PC-9 (cell line): ENCODE measurements at regions of chr1 and their contacts with region 1.

Region 1: DNA sequence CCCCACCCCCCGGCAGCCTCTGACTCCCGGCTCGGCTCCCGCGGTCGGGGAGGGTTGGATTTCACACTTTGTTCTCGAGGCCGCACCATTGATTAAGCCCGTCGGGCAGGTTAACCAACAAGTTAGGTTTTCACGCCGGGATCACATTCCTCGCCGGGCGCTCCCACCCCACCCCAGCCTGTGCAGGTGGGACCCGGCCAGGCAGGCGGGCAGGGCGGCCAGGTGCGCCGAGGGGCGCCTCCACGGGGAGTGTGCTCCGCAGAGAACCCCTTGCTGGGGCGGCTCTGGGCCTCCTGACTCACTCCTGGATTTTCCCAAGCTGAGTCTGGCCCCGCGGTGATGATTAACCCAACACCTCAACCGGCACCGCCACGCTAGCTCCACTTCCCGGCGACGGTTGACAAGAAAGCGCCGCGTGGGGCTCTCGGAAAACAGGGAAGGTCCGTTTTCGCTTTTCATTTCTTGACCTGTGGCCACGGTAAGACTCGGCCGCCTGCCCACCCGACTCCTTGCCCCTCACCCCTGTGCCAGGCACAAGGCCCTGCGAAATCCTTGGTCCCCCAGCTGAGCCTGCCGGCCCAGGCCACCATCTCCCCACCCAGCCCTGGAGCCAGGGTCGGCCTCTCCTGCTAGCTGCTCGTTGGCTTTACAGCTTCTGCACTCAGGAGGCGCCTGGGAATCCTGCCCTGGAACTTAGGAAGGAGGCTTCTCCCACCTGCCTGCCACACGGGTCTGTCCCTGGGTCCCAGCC is 8.8 kb upstream of the TTLL10 start:
- DNase-seq: peak; percentile 76 to 78
- H3K4me3 ChIP-seq: peak overlapping the region; percentile 99
- H3K27ac ChIP-seq: peak overlapping the region; percentile 84
- H3K4me1 ChIP-seq: peaks cover 18% of the 10 kb centered on the region
- H3K27me3 ChIP-seq: no peaks in the 10 kb centered on the region
- CTCF ChIP-seq: no peak

Region 2: GRCh38 chr1:1020000-1020404 is 144.9 kb before region 1 on chr1 and contains the start of gene AGRN:
- CTCF ChIA-PET with region 1: no interaction called
- POLR2A ChIA-PET with region 1: no interaction called
- intact Hi-C with region 1: loop called (anchors 2 kb)
- DNase-seq: peak in 1 of 2 experiments; percentile 57
- H3K4me3 ChIP-seq: peak within 1 kb of the TSS; percentile 80
- H3K27ac ChIP-seq: peak within 1 kb of the TSS; percentile 76
- H3K4me1 ChIP-seq: peaks cover 32% of the 10 kb centered on the region
- H3K27me3 ChIP-seq: no peaks in the 10 kb centered on the region
- CTCF ChIP-seq: no peak
- total RNA-seq, gene AGRN: 278 and 381 TPM in 2 replicates

Region 3: DNA sequence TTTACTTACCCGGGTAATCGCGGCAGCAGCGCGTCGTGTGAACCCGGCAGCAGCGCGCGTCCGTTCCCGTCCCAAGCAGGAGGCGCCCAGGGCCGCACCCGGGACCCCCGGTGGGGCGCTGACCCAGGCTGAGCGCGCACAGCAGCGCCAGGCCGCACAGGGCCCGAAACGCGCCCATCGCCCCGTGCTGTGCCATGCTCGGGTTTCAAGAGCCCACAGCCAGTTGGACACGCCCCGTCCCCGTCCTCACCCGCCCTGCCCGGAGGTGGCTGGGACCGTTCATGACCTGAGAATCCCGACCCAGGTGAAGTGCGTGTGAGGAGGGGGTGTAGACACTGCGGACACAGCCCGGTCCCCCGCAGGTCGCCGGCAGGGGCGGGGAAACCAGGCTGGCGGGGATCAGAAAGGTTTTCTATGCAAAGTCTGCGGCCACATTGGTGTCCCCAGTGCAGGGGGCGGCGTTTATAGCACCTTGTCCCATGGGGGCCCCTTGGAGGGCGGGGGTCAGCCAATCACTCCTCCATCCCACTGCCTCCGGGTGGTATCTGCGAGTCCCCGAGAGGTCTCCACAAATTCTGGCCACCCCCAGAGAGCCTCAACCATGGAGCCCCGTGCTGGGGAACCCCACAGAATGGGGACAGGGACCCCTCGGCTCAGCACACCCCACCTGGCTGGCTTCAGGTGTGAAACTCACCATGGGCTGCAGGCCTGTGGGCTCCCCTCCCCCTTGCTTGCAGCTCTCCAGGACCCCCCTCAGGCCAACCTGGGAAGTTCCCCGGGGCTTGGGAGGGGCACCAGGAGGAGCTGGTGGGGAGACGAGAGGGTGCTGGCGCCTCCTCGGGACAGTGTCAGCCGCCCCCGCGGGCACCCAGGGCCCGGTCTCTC is 41.7 kb after region 1 on chr1 and contains the start of gene TNFRSF18:
- CTCF ChIA-PET with region 1: no interaction called
- POLR2A ChIA-PET with region 1: no interaction called
- intact Hi-C with region 1: loop called (anchors 5 kb)
- DNase-seq: peak in 1 of 2 experiments; percentile 72
- H3K4me3 ChIP-seq: no peak within 1 kb of the TSS; the same call in 1 of the 2 replicates
- H3K27ac ChIP-seq: no peak within 1 kb of the TSS
- H3K4me1 ChIP-seq: peaks cover 11% of the 10 kb centered on the region
- H3K27me3 ChIP-seq: no peaks in the 10 kb centered on the region
- CTCF ChIP-seq: no peak
- total RNA-seq, gene TNFRSF18: 6.9 and 14.1 TPM in 2 replicates

Region 4: DNA sequence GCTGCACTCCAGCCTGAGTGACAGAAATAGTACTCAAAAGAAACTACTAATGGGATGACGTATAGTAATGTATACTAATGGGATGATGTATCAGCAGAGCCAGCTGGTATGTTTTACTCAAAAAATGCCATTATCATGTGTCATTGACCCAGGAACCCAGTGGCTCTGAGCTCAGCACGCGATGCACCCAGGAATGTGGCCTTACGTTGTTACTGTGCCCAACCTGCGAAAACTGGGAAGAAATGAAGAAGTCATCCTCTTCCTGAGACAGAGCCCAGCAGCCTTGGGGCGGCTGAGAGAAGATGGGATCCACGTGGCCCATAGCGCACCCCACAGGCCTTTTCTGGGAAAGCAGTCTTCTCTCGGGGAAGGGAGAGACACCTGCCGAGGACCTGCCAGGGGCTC is 100.0 kb after region 1 on chr1:
- CTCF ChIA-PET with region 1: no interaction called
- POLR2A ChIA-PET with region 1: no interaction called
- intact Hi-C with region 1: loop called (anchors 1 kb)
- DNase-seq: peak; percentile 70 to 84
- H3K4me3 ChIP-seq: no peak overlapping the region
- H3K27ac ChIP-seq: peak overlapping the region; percentile 44; the same call in 1 of the 2 replicates
- H3K4me1 ChIP-seq: no peaks in the 10 kb centered on the region
- H3K27me3 ChIP-seq: no peaks in the 10 kb centered on the region
- CTCF ChIP-seq: peak; percentile 53